ENCODE measurements at regions of chr11 and their contacts with region 1.

Region 1: GRCh38 chr11:82867495-82868082 is 32.6 kb downstream of the PRCP start:
- DNase-seq: peak; percentile 87
- ATAC-seq: peak; percentile 68
- H3K4me3 Mint-ChIP-seq: peak overlapping the region; percentile 48
- H3K27ac Mint-ChIP-seq: peak overlapping the region; percentile 41
- H3K4me1 Mint-ChIP-seq: peaks cover 14% of the 10 kb centered on the region
- H3K27me3 Mint-ChIP-seq: no peaks in the 10 kb centered on the region

Region 2: GRCh38 chr11:82883853-82884252 is 16.3 kb after region 1 on chr11:
- CTCF ChIA-PET with region 1: interaction called, 18 read pairs
- POLR2A ChIA-PET with region 1: no interaction called
- DNase-seq: no peak
- ATAC-seq: no peak
- H3K4me3 Mint-ChIP-seq: no peak overlapping the region
- H3K27ac Mint-ChIP-seq: no peak overlapping the region
- H3K4me1 Mint-ChIP-seq: no peaks in the 10 kb centered on the region
- H3K27me3 Mint-ChIP-seq: no peaks in the 10 kb centered on the region

Region 3: DNA sequence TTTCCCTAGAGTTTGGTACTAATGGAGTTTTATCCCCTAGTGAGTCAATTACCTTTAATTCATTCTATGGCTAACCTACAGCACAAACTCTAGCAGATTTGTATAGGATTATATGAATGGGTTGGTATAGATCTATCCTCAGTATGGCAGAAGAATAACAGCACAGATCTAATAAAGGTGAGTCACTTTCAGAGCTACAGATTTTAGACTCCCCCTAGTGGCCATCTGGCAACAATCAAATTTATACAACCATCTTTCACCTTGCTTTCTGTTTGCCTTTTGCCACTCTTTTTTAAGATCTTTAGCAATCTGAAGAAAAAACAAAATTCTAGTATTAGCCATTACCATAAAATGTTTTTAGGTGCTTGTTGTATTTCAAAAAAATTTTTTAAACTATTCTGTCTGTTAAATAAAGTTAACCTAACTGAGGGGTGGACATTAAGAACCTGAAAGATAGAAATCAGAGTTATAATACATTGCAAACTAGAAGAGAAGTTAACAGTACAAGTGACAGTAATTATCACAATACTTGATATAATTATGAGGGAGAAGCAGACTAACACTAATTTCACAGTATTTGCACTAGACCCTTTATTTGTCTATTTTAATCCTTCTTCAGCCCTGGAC is 59.8 kb after region 1 on chr11:
- CTCF ChIA-PET with region 1: interaction called, 12 read pairs
- POLR2A ChIA-PET with region 1: no interaction called
- DNase-seq: peak; percentile 56
- ATAC-seq: peak; percentile 91
- H3K4me3 Mint-ChIP-seq: no peak overlapping the region
- H3K27ac Mint-ChIP-seq: no peak overlapping the region
- H3K4me1 Mint-ChIP-seq: peaks cover 13% of the 10 kb centered on the region
- H3K27me3 Mint-ChIP-seq: no peaks in the 10 kb centered on the region

Region 4: GRCh38 chr11:83071567-83072349 is 204.2 kb after region 1 on chr11 and contains the start of gene RAB30:
- CTCF ChIA-PET with region 1: interaction called, 10 read pairs
- POLR2A ChIA-PET with region 1: no interaction called
- DNase-seq: peak; percentile 98
- ATAC-seq: peak; percentile 98
- H3K4me3 Mint-ChIP-seq: no peak within 1 kb of the TSS
- H3K27ac Mint-ChIP-seq: no peak within 1 kb of the TSS
- H3K4me1 Mint-ChIP-seq: peaks cover 28% of the 10 kb centered on the region
- H3K27me3 Mint-ChIP-seq: no peaks in the 10 kb centered on the region
- total RNA-seq, gene RAB30: 8.8 to 13.3 TPM

Region 5: DNA sequence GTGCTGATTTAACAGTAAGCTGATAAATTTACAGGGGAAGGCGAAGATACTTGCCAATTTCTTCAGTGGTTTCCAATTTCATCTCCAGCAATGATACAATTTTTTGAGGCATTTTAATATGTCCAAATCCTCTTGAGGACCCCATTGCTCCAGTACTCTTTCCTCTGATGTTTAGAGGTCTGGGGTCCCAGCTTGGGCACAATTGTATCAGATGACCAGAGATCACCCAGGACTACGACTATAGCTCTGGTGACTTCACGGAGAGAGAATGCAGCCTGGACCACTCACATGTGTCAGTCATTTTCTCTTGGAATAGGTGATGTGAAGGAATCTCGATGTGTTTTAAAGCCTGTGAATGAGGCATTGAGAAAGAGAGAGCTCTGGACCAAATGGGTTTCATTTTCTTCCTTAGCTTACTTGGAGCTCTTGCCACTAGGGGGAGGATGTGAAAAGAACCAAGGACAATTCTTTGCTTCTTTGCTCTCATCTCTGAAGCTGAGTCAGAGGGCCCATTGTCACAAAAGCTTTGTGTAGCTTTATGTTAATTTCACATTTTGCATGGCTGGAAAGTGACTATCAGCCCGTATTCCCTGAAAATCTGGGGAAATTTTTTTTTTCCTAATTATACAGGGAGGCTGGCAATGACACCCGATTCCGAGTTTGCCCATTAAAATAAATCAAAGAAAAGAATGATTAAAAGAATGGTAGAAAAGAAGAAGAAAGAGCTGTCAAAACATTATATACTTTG is 425.3 kb after region 1 on chr11:
- CTCF ChIA-PET with region 1: interaction called, 13 read pairs
- POLR2A ChIA-PET with region 1: no interaction called
- DNase-seq: peak; percentile 52
- ATAC-seq: peak; percentile 85
- H3K4me3 Mint-ChIP-seq: peak overlapping the region; percentile 48
- H3K27ac Mint-ChIP-seq: no peak overlapping the region
- H3K4me1 Mint-ChIP-seq: peaks cover 7% of the 10 kb centered on the region
- H3K27me3 Mint-ChIP-seq: peaks cover 6% of the 10 kb centered on the region

Measured in activated CD8-positive, alpha-beta T cell treated with anti-CD3 and anti-CD28 coated beads, Interleukin-2, amount 10 ng/mL, durations not matched to agents 7 days and 5 days (primary cell).